ENCODE measurements at regions of chr3 and their contacts with region 1.

Region 1: DNA sequence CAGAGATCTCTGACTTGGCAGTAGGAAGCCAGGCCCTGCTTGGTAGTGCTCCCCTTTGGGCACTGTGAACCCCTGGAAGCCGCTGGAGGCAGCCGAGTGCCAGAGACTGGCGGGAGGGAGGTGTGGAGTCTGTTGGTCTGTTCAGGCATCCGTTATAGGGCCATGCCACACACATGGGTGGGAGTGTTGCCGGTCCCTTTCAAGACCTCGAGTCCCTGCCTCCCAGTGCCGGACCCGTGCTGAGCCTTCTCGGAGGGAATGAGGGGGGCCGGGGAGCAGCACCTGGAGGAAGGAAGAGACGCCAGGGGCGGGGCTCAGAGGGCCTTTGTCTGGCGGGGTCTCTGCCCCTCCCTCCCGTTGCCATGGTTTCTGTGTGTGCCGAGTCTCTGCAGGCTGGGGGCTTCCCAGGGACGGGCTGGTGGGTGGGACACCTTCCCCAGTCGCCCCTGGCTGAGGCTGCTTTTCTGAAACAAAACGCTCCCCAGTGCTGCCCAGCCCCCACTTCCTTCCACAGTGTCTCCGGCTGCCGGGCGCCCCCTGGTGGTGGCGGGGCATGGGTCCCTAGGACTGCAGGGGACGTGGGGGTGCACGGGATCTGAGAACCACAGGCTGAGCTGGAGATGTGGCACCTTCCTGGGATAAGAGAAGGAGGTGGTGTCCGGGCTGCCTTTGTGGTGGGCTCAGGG is 10.0 kb downstream of the GNAI2 start:
- H3K4me3 ChIP-seq: peak overlapping the region; percentile 26
- H3K27ac ChIP-seq: peak overlapping the region; percentile 43
- H3K4me1 ChIP-seq: peaks cover 6% of the 10 kb centered on the region; the same call in 1 of the 2 replicates
- CTCF ChIP-seq: peak; percentile 87

Region 2: GRCh38 chr3:50227390-50228183 is 18.4 kb before region 1 on chr3:
- CTCF ChIA-PET with region 1: interaction called, 56 read pairs
- POLR2A ChIA-PET with region 1: interaction called, 4 read pairs
- H3K4me3 ChIP-seq: peak overlapping the region; percentile 55
- H3K27ac ChIP-seq: peak overlapping the region; percentile 60; the same call in 1 of the 2 replicates
- H3K4me1 ChIP-seq: no peaks in the 10 kb centered on the region
- CTCF ChIP-seq: peak; percentile 56

Region 3: GRCh38 chr3:50235716-50236496 is 10.1 kb before region 1 on chr3 and contains the start of gene GNAI2:
- CTCF ChIA-PET with region 1: interaction called, 56 read pairs
- POLR2A ChIA-PET with region 1: interaction called, 17 read pairs
- H3K4me3 ChIP-seq: peak within 1 kb of the TSS; percentile 67
- H3K27ac ChIP-seq: peak within 1 kb of the TSS; percentile 77
- H3K4me1 ChIP-seq: peaks cover 14% of the 10 kb centered on the region
- CTCF ChIP-seq: no peak

Region 4: GRCh38 chr3:50260027-50260941 is 14.3 kb after region 1 on chr3:
- CTCF ChIA-PET with region 1: interaction called, 49 read pairs
- POLR2A ChIA-PET with region 1: interaction called, 7 read pairs
- H3K4me3 ChIP-seq: peak overlapping the region; percentile 36
- H3K27ac ChIP-seq: peak overlapping the region; percentile 86
- H3K4me1 ChIP-seq: peaks cover 3% of the 10 kb centered on the region; the same call in 1 of the 2 replicates
- CTCF ChIP-seq: peak; percentile 75; the same call in 1 of the 2 replicates